ENCODE measurements at regions of chr3 and their contacts with region 1.

Region 1: GRCh38 chr3:106566277-106566676 is 697.5 kb upstream of the CBLB start:
- DNase-seq: no peak
- H3K4me3 ChIP-seq: no peak overlapping the region
- H3K27ac ChIP-seq: peak overlapping the region; percentile 29
- H3K4me1 ChIP-seq: peaks cover 15% of the 10 kb centered on the region
- H3K27me3 ChIP-seq: no peaks in the 10 kb centered on the region
- CTCF ChIP-seq: peak in 1 of 2 donors; percentile 6
- POLR2A ChIP-seq: no peak

Region 2: DNA sequence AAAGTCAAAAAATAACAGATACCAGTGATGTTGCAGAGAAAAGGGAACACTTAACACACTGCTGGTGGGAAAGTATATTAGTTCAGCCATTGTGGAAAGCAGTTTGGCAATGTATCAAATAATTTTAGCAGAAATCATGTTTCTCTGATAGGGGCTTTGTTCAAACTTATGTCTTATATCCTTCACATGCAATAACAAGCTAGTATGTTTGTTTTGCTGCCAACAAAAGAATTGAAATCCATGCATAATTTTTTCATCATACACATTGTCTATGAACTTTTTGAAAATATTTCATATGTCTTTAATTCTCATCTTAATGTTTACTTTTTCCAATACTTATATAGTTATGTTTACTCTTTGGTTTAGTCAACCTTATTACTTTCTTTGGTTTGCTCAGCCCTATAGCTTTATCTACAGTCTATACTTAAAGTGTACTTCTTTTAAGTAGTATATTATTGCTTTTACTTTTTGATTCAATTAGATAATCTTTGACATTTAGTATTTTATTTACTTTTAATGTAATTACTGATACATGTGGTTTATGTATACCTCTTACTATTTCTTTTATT is 57.9 kb before region 1 on chr3:
- CTCF ChIA-PET with region 1: no interaction called
- POLR2A ChIA-PET with region 1: no interaction called
- dilution Hi-C with region 1: no loop called
- intact Hi-C with region 1: loop called (anchors 5 kb)
- DNase-seq: no peak
- H3K4me3 ChIP-seq: no peak overlapping the region
- H3K27ac ChIP-seq: no peak overlapping the region
- H3K4me1 ChIP-seq: no peaks in the 10 kb centered on the region
- H3K27me3 ChIP-seq: no peaks in the 10 kb centered on the region
- CTCF ChIP-seq: no peak
- POLR2A ChIP-seq: no peak